ENCODE measurements at regions of chr22 and their contacts with region 1.

Region 1: GRCh38 chr22:38755911-38756532 is at the start of gene SUN2:
- DNase-seq: peak; percentile 95 to 100 (median 98)

Region 2: GRCh38 chr22:38705235-38706100 is 50.6 kb before region 1 on chr22 and contains the start of gene GTPBP1:
- intact Hi-C with region 1: loop called (anchors 2 kb)
- DNase-seq: peak; percentile 96 to 100 (median 98)